ENCODE measurements at regions of chr12 and their contacts with region 1.

Region 1: GRCh38 chr12:68638721-68639395 is 28.2 kb downstream of the RAP1B start:
- DNase-seq: no peak
- ATAC-seq: no peak
- H3K4me3 Mint-ChIP-seq: no peak overlapping the region
- H3K27ac Mint-ChIP-seq: peak overlapping the region; percentile 38
- H3K4me1 Mint-ChIP-seq: peaks cover 86% of the 10 kb centered on the region
- H3K27me3 Mint-ChIP-seq: no peaks in the 10 kb centered on the region
- CTCF ChIP-seq: no peak

Region 2: DNA sequence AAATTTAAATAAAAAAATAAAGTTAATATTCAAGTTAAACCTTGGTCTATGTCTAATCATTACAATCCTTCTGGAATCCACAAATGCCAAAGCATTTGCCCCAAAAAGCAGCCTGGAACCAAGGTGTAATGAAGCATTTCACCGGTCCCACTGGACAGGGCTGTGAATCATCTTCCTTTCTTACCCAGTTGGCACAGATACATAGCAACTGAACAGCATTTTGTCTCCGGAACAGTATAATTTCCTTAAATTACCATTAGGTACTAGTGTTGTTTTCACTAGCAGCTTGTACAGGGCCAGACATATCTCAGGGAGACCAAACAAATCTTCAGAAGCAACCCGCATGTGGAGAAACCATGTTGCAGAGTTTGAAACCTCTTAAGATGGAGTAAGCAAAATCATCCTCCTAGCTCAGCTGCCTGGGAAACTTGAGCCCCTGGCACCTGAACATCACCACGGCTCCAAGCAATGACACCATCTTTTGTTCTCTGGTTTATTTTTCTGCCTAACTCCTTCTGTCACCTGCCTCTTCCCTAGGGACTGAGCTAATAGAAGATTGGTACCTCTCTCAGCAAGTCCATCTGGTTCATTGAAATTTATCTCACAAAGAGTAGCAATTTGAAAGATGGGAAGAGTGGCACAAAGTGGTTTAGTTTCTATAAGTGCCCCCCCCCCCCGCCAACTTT is 288.8 kb before region 1 on chr12:
- CTCF ChIA-PET with region 1: no interaction called
- POLR2A ChIA-PET with region 1: no interaction called
- intact Hi-C with region 1: no loop called
- DNase-seq: no peak
- ATAC-seq: no peak
- H3K4me3 Mint-ChIP-seq: no peak overlapping the region
- H3K27ac Mint-ChIP-seq: no peak overlapping the region
- H3K4me1 Mint-ChIP-seq: peaks cover 11% of the 10 kb centered on the region
- H3K27me3 Mint-ChIP-seq: no peaks in the 10 kb centered on the region
- CTCF ChIP-seq: no peak

Region 3: GRCh38 chr12:68602720-68603119 is 36.1 kb before region 1 on chr12:
- CTCF ChIA-PET with region 1: no interaction called
- POLR2A ChIA-PET with region 1: no interaction called
- intact Hi-C with region 1: no loop called
- DNase-seq: no peak
- ATAC-seq: no peak
- H3K4me3 Mint-ChIP-seq: no peak overlapping the region
- H3K27ac Mint-ChIP-seq: no peak overlapping the region
- H3K4me1 Mint-ChIP-seq: peaks cover 40% of the 10 kb centered on the region
- H3K27me3 Mint-ChIP-seq: no peaks in the 10 kb centered on the region
- CTCF ChIP-seq: no peak

Region 4: GRCh38 chr12:68628698-68629097 is 10.2 kb before region 1 on chr12:
- CTCF ChIA-PET with region 1: interaction called, 3 read pairs
- POLR2A ChIA-PET with region 1: interaction called, 11 read pairs
- intact Hi-C with region 1: no loop called
- DNase-seq: no peak
- ATAC-seq: no peak
- H3K4me3 Mint-ChIP-seq: no peak overlapping the region
- H3K27ac Mint-ChIP-seq: peak overlapping the region; percentile 83
- H3K4me1 Mint-ChIP-seq: peaks cover 81% of the 10 kb centered on the region
- H3K27me3 Mint-ChIP-seq: no peaks in the 10 kb centered on the region
- CTCF ChIP-seq: no peak